BJ (cell line): ENCODE measurements at regions of chr13 and their contacts with region 1.

Region 1: GRCh38 chr13:51452361-51453206 is at the start of gene INTS6:
- DNase-seq: peak; percentile 95
- H3K4me3 ChIP-seq: peak within 1 kb of the TSS; percentile 96
- H3K27me3 ChIP-seq: no peaks in the 10 kb centered on the region
- CTCF ChIP-seq: no peak
- polyA plus RNA-seq, gene INTS6: 17.2 and 32.0 TPM in 2 replicates

Region 2: DNA sequence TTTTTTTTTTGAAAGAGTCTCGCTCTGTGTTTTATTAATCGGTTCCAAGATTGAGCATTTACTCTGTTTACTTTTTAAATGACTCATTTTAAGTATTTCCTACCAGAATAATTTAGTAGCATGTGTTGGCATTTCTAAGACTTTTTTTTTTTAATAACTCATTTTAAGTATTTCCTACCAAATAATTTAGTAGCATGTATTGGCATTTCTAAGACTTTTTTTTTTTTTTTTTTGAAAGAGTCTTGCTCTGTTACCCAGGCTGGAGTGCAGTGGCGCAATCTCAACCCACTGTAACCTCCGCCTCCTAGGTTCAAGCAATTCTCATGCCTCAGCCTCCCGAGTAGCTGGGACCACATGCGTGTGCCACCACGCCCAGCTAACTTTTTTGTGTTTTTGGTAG is 1995.4 kb before region 1 on chr13:
- CTCF ChIA-PET with region 1: no interaction called
- POLR2A ChIA-PET with region 1: interaction called, 12 read pairs
- DNase-seq: no peak
- H3K4me3 ChIP-seq: no peak overlapping the region
- H3K27me3 ChIP-seq: no peaks in the 10 kb centered on the region
- CTCF ChIP-seq: no peak

Region 3: DNA sequence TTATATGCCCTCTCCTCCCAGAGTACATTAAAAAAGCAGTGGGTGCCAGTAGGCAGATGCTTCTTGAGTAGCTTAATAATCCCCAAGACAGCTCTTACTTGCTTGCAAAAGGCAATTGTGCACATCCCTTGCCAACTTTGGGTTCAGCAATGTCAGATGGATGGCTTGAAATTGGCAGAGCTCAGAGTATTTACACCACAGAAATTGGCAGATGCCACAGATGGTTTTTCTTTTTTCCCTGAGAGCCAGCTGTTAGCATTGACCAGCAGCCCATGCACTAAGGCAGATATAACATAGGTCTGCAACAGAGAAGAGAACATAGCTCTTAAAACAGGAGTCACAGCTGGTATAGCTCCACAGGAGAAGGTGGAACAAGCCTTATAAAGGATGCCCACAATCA is 561.4 kb before region 1 on chr13:
- CTCF ChIA-PET with region 1: no interaction called
- POLR2A ChIA-PET with region 1: no interaction called
- DNase-seq: no peak
- H3K4me3 ChIP-seq: no peak overlapping the region
- H3K27me3 ChIP-seq: peaks cover 5% of the 10 kb centered on the region
- CTCF ChIP-seq: no peak

Region 4: GRCh38 chr13:51583875-51584730 is 131.5 kb after region 1 on chr13 and contains the start of gene WDFY2:
- CTCF ChIA-PET with region 1: no interaction called
- POLR2A ChIA-PET with region 1: interaction called, 11 read pairs
- DNase-seq: peak; percentile 100
- H3K4me3 ChIP-seq: peak within 1 kb of the TSS; percentile 89
- H3K27me3 ChIP-seq: no peaks in the 10 kb centered on the region
- CTCF ChIP-seq: no peak
- polyA plus RNA-seq, gene WDFY2: 4.3 and 5.6 TPM in 2 replicates